ENCODE measurements at regions of chr15 and their contacts with region 1.

Region 1: GRCh38 chr15:64825431-64826294 is at the start of gene PIF1:
- DNase-seq: peak; percentile 92
- H3K4me3 Mint-ChIP-seq: peak within 1 kb of the TSS; percentile 91
- H3K27ac Mint-ChIP-seq: peak within 1 kb of the TSS; percentile 91
- H3K4me1 Mint-ChIP-seq: peaks cover 40% of the 10 kb centered on the region
- H3K27me3 Mint-ChIP-seq: no peaks in the 10 kb centered on the region
- total RNA-seq, gene PIF1: 19.1 and 23.9 TPM in 2 replicates

Region 2: DNA sequence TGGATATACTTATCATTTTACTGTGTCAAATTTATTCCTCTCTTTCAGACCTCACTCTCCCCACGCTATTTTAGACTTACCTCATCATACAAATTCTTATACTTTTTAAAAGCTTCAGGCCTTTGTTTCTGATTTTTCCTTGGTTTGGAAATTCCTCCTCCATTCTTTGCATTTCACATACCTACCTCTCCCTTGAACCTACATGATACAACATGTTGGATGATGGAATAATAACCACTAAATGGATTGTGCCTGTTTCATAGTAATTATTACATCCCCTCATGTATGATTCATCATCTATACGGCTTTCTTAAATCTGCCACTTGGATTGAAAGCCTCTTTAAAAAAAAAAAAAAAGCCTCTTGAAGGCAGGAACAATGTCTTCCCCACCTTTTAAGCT is 413.4 kb before region 1 on chr15:
- intact Hi-C with region 1: no loop called
- DNase-seq: no peak
- H3K4me3 Mint-ChIP-seq: no peak overlapping the region
- H3K27ac Mint-ChIP-seq: no peak overlapping the region
- H3K4me1 Mint-ChIP-seq: no peaks in the 10 kb centered on the region
- H3K27me3 Mint-ChIP-seq: no peaks in the 10 kb centered on the region

Region 3: DNA sequence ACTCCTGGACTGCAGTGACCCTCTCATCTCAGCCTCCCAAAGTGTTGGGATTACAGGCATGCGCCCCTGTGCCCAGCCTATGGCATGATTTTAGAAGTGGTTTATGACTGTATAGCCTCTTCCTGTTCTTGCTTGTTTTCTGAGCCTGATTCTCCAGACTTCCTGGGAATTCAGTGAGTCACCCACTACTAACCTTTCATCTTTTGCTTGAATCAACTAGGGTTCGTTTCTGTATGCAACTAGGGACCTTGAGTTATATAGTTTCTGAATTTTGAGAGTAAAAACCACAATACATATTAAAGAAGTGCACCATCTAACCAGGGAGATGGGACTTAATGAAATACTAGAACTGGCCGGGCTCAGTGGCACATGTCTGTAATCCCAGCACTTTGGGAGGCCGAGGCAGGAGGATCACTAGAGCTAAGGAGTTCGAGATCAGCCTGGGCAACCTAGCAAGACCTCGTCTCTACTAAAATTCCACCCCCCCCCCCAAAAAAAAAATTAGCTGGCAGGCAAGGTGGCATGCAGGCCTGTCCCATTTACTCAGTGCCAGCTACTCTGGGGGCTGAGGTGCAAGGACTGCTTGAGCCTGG is 289.3 kb before region 1 on chr15:
- intact Hi-C with region 1: no loop called
- DNase-seq: no peak
- H3K4me3 Mint-ChIP-seq: peak overlapping the region; percentile 13
- H3K27ac Mint-ChIP-seq: peak overlapping the region; percentile 66
- H3K4me1 Mint-ChIP-seq: peaks cover 38% of the 10 kb centered on the region
- H3K27me3 Mint-ChIP-seq: no peaks in the 10 kb centered on the region

Region 4: DNA sequence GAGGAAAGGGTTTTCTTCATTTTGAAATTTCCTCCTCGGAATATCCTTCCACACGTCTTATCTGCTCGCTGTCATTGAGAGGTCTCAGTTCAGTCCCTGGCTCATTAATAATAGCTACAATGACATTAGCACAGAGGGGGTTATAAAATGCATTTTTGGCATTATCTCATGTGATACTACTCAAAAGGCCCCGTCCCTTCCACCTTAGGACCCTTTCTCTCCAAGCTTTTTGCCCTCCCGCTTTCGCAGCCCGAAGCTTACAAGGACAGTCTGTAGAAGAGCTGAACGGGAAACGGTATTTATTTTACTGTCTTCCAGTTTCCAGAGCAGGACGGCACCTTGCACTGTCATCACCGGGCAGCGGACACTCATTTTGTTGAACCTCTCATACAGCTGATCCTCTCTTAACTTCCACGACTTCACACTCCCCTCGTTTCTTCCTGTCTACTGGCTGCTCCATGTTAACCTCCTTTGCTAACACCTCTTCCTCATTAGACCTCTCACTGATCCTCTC is 10.4 kb after region 1 on chr15:
- intact Hi-C with region 1: loop called (anchors 1 kb)
- DNase-seq: no peak
- H3K4me3 Mint-ChIP-seq: peak overlapping the region; percentile 57
- H3K27ac Mint-ChIP-seq: peak overlapping the region; percentile 80
- H3K4me1 Mint-ChIP-seq: peaks cover 41% of the 10 kb centered on the region
- H3K27me3 Mint-ChIP-seq: no peaks in the 10 kb centered on the region

Region 5: GRCh38 chr15:64883997-64884511 is 58.4 kb after region 1 on chr15:
- intact Hi-C with region 1: loop called (anchors 2 kb)
- DNase-seq: peak; percentile 52
- H3K4me3 Mint-ChIP-seq: peak overlapping the region; percentile 69
- H3K27ac Mint-ChIP-seq: peak overlapping the region; percentile 91
- H3K4me1 Mint-ChIP-seq: peaks cover 28% of the 10 kb centered on the region
- H3K27me3 Mint-ChIP-seq: no peaks in the 10 kb centered on the region

Region 6: DNA sequence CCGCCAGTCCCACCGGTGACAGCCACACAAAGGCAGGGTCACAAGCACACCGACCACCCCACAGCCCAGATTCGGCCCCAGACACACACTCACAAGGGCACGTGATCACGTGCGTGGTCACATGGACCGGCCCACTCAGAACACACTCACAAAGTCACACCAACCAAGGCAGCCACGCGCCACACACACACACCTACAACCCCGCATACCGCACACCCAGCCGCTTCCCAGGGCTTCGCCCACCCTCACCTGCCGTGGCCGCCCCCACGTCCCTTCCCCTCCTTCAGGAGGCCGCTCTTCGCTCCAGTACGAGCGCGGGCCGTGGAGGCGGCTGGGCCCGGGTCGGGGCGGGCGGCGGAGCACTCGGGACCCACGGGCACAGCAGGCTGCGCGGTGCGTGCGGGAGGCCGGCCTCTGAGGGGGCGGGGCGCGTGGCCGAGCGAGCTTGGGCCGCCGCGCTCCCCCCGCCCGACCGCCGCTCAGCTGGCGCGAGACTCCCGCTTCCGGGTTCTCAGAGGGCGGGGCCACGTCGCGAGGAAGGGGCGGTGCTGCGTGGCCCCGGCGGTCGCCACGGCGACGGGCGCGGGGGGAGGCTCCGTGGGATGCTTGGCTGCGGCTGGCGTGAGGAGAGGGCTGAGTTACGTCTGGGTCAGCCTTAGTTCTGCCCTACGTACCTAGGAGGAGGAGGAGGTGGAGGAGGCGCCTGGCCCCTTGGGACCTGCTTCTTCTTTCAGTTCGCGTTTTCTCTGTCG is 163.9 kb after region 1 on chr15 and contains the start of gene SPG21:
- intact Hi-C with region 1: loop called (anchors 1 kb)
- DNase-seq: peak; percentile 92
- H3K4me3 Mint-ChIP-seq: peak within 1 kb of the TSS; percentile 99
- H3K27ac Mint-ChIP-seq: peak within 1 kb of the TSS; percentile 93
- H3K4me1 Mint-ChIP-seq: peaks cover 51% of the 10 kb centered on the region
- H3K27me3 Mint-ChIP-seq: no peaks in the 10 kb centered on the region
- total RNA-seq, gene SPG21: 70.2 and 73.3 TPM in 2 replicates

Measured in activated T-helper 1 cell treated with anti-CD3 and anti-CD28 coated beads, Interleukin-12 subunit alpha, Interleukin-12 subunit beta, Interleukin-2, Interleukin-4 antibody, amounts not matched to agents 30 ng/mL and 10 ng/mL and 1 ng/mL, durations not matched to agents 14 hours and 24 hours and 36 hours (primary cell).